ENCODE measurements at regions of chr2 and their contacts with region 1.

Region 1: DNA sequence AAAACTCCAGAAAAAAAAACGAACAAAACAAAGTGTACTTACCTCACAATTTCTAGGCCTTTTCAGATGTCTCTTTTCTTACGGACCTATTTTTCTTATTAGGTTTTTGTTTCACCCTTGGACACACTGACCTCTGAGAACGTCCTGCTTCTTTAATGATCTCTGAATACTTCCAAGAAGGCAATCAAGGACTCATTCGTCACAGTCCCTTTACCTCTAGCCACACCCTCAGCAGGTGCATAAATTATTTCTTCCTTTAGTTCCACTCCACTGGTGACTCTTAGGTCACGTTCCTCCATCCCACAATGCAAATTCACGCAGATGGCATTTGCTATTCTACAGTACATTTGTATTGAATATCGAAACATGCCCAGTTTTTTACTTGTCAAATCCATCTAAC is 21.9 kb downstream of the PELI1 start:
- DNase-seq: peak; percentile 64
- ATAC-seq: peak; percentile 64
- H3K4me3 ChIP-seq: no peak overlapping the region
- H3K4me3 Mint-ChIP-seq: peak overlapping the region; percentile 21
- H3K27ac ChIP-seq: no peak overlapping the region
- H3K27ac Mint-ChIP-seq: no peak overlapping the region
- H3K4me1 ChIP-seq: peaks cover 10 to 13% of the 10 kb centered on the region in 2 donors
- H3K4me1 Mint-ChIP-seq: peaks cover 51% of the 10 kb centered on the region
- H3K27me3 ChIP-seq: no peaks in the 10 kb centered on the region
- H3K27me3 Mint-ChIP-seq: no peaks in the 10 kb centered on the region
- CTCF ChIP-seq: no peak

Region 2: DNA sequence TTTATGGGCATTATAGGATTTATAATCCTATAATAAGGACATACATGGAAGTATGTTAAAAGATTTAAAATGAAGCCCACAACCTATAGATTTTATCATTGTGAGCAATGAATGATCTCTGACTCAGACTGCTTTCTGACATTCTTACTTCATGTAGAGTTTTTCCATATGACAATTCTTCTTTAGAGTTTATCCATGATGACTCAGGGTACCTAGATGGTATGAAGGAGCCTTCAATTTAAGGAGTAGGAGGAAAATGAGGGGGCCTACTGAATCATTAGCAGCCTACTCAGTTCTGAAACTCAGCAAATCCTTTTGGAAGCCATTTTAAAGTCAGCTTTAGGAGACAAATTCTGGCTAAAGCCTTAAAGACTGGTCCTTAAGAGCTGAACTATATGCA is 11.5 kb after region 1 on chr2:
- CTCF ChIA-PET with region 1: interaction called, 3 read pairs
- POLR2A ChIA-PET with region 1: no interaction called
- intact Hi-C with region 1: loop called (anchors 2 kb)
- DNase-seq: no peak
- ATAC-seq: no peak
- H3K4me3 ChIP-seq: no peak overlapping the region
- H3K4me3 Mint-ChIP-seq: no peak overlapping the region
- H3K27ac ChIP-seq: no peak overlapping the region
- H3K27ac Mint-ChIP-seq: no peak overlapping the region
- H3K4me1 ChIP-seq: peaks cover 13 to 17% of the 10 kb centered on the region in 2 donors
- H3K4me1 Mint-ChIP-seq: peaks cover 63% of the 10 kb centered on the region
- H3K27me3 ChIP-seq: no peaks in the 10 kb centered on the region
- H3K27me3 Mint-ChIP-seq: no peaks in the 10 kb centered on the region
- CTCF ChIP-seq: no peak